Prostate gland (tissue), 2 donors: ENCODE measurements at regions of chr10 and their contacts with region 1.

Region 1: GRCh38 chr10:27030060-27030459 is 70.2 kb downstream of the ANKRD26 start:
- DNase-seq: no peak
- H3K4me3 ChIP-seq: no peak overlapping the region
- H3K27ac ChIP-seq: no peak overlapping the region
- H3K4me1 ChIP-seq: no peaks in the 10 kb centered on the region
- H3K27me3 ChIP-seq: no peaks in the 10 kb centered on the region
- CTCF ChIP-seq: no peak
- POLR2A ChIP-seq: no peak

Region 2: GRCh38 chr10:26997610-26998009 is 32.5 kb before region 1 on chr10:
- intact Hi-C with region 1: loop called (anchors 2 kb)
- DNase-seq: no peak
- H3K4me3 ChIP-seq: no peak overlapping the region
- H3K27ac ChIP-seq: no peak overlapping the region
- H3K4me1 ChIP-seq: no peaks in the 10 kb centered on the region
- H3K27me3 ChIP-seq: no peaks in the 10 kb centered on the region
- CTCF ChIP-seq: no peak
- POLR2A ChIP-seq: no peak